Caco-2 (cell line): ENCODE measurements at regions of chr2 and their contacts with region 1.

Region 1: DNA sequence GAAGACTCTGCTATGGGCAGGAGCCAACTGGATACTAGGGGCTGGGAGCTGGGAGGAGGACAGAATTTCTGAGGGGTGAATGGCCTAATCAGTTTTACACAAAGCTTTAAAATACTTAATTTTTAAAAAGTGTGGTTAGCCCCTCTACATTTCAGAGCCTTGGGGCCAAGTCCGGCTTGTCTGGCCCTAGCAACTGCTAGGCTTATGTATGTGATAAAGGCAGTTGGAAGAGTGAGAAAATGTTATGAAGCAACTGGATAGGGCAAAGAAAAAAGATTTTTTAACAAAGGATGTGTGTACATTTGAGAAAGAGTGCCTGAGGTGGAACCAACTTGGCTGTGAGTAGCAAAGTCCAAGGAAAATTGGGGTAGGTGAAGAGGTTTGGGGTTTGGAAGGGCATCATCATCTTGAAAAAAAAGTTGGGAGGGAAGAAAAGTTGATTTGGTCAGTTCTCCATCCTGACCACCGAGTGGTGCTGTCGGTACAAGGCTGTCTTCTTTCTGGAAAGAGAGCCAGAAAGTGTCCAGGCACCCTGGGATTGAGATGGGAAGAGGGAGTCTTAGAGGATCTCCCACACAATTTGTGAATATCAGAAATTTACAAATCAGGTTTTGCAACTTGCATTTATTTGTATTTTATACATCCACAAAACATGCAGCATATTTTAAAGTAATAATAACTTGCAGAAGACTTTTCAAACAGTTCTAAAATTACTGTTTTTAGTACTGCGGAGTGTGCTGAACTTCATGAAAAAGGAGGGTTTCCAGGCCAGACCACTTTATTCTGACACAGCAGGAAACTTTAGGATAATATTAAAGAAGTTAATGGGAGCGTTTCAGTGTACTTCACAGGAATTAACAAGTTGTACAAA is 10.5 kb upstream of the CDK15 start:
- DNase-seq: peak in 1 of 2 experiments; percentile 48
- H3K4me3 ChIP-seq: no peak overlapping the region
- H3K4me3 Mint-ChIP-seq: no peak overlapping the region
- H3K27ac Mint-ChIP-seq: no peak overlapping the region
- H3K4me1 ChIP-seq: peaks cover 5% of the 10 kb centered on the region; the same call in 1 of the 2 replicates
- H3K4me1 Mint-ChIP-seq: no peaks in the 10 kb centered on the region
- H3K27me3 ChIP-seq: no peaks in the 10 kb centered on the region
- H3K27me3 Mint-ChIP-seq: no peaks in the 10 kb centered on the region
- CTCF ChIP-seq: peak; percentile 58 to 87

Region 2: DNA sequence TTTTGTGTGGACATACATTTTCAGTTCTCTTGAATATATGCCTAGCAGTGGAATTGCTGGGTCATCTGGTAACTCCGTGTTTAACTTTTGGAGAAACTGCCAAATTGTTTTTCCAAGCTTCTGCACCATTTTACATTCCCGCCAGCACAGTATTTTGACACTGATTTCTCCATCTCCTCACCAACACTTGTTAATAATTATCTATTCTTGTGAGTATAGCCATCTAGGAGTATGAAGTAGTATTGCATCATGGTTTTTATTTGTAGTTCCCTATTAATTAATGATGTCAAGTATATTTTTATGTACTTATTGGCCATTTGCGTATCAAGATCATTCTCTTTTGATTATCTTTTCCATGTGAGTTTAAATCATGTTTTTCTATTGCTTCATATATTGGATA is 1227.9 kb before region 1 on chr2:
- CTCF ChIA-PET with region 1: no interaction called
- POLR2A ChIA-PET with region 1: no interaction called
- intact Hi-C with region 1: no loop called
- DNase-seq: no peak
- H3K4me3 ChIP-seq: no peak overlapping the region
- H3K4me3 Mint-ChIP-seq: no peak overlapping the region
- H3K27ac Mint-ChIP-seq: no peak overlapping the region
- H3K4me1 ChIP-seq: no peaks in the 10 kb centered on the region
- H3K4me1 Mint-ChIP-seq: no peaks in the 10 kb centered on the region
- H3K27me3 ChIP-seq: no peaks in the 10 kb centered on the region
- H3K27me3 Mint-ChIP-seq: no peaks in the 10 kb centered on the region
- CTCF ChIP-seq: no peak

Region 3: DNA sequence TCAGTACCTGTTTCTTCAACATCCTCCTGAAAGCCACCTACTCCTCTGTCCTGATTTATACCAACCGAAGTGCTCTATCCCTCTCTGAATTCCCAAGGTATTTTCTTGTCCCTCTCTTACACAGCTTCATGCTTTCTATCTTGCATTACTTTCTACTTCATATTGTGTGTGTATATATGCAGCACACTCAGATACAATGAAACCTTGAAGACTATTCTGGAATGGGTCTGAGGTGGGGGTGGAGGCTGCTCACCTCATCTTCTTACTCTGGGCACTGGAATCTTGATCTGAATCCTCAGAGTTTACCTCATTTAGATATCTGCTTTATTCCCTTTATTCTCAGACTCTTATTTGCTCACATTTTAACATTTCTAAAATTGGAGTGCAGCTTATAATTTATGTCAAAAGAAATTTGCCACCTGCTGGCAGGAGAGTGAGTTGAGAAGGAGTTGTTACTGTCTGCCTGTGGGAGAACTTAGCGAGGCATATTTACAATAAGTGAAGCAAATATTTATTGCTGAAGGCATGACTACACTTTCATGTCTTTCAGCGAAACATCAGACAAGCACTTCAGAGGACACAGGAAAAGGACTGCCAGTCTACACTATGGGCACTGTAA is 260.7 kb after region 1 on chr2:
- CTCF ChIA-PET with region 1: no interaction called
- POLR2A ChIA-PET with region 1: no interaction called
- intact Hi-C with region 1: loop called (anchors 1 kb)
- DNase-seq: no peak
- H3K4me3 ChIP-seq: no peak overlapping the region
- H3K4me3 Mint-ChIP-seq: no peak overlapping the region
- H3K27ac Mint-ChIP-seq: no peak overlapping the region
- H3K4me1 ChIP-seq: peaks cover 22% of the 10 kb centered on the region
- H3K4me1 Mint-ChIP-seq: peaks cover 7% of the 10 kb centered on the region
- H3K27me3 ChIP-seq: no peaks in the 10 kb centered on the region
- H3K27me3 Mint-ChIP-seq: no peaks in the 10 kb centered on the region
- CTCF ChIP-seq: peak; percentile 44 to 52

Region 4: GRCh38 chr2:203578759-203579643 is 1783.2 kb after region 1 on chr2:
- CTCF ChIA-PET with region 1: no interaction called
- POLR2A ChIA-PET with region 1: no interaction called
- intact Hi-C with region 1: no loop called
- DNase-seq: peak; percentile 89 to 92
- H3K4me3 ChIP-seq: no peak overlapping the region
- H3K4me3 Mint-ChIP-seq: peak overlapping the region; percentile 4
- H3K27ac Mint-ChIP-seq: peak overlapping the region; percentile 88
- H3K4me1 ChIP-seq: peaks cover 30% of the 10 kb centered on the region
- H3K4me1 Mint-ChIP-seq: peaks cover 21% of the 10 kb centered on the region
- H3K27me3 ChIP-seq: no peaks in the 10 kb centered on the region
- H3K27me3 Mint-ChIP-seq: no peaks in the 10 kb centered on the region
- CTCF ChIP-seq: no peak